Right lobe of liver (tissue), 6 donors: ENCODE measurements at regions of chr11 and their contacts with region 1.

Region 1: GRCh38 chr11:14907411-14908213 is 15.6 kb upstream of the CYP2R1 start:
- DNase-seq: peak; percentile 77 to 85 (median 78)
- ATAC-seq: peak; percentile 67 to 83 (median 72)
- H3K4me3 ChIP-seq: peak overlapping the region in 1 of 3 donors; percentile 8
- H3K27ac ChIP-seq: no peak overlapping the region
- H3K4me1 ChIP-seq: peaks cover 0 to 13% (median 3%) of the 10 kb centered on the region in 4 donors
- H3K27me3 ChIP-seq: no peaks in the 10 kb centered on the region
- CTCF ChIP-seq: peak; percentile 70 to 81 (median 77)
- POLR2A ChIP-seq: no peak

Region 2: DNA sequence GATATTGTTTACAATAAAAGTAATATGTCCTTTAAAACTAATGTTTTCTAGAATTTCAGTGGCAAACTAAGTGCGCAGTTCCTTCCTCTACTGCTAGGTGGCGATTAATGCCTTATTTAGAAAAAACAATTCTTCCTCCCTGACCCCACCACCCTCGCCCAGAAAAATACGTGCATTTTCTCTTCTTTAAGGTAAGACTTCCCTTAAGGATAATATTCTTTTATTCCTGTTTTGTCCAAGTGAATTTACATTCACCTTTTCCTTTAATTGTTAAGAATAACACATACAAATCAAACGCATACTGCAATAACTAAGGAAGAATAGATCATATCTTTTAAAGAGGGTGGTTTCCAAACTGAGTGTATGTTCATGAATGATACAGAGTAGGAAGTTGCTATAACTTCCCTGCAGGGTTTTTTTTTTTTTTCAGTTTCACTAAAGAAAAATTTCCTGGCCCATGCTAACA is 370.4 kb before region 1 on chr11:
- intact Hi-C with region 1: loop called in 1 of 2 experiments (anchors 10 kb)
- DNase-seq: no peak
- ATAC-seq: peak in 3 of 4 donors; percentile 20 to 43 (median 38)
- H3K4me3 ChIP-seq: no peak overlapping the region
- H3K27ac ChIP-seq: peak overlapping the region in 1 of 3 donors; percentile 94
- H3K4me1 ChIP-seq: peaks cover 0 to 45% (median 4%) of the 10 kb centered on the region in 4 donors
- H3K27me3 ChIP-seq: no peaks in the 10 kb centered on the region
- CTCF ChIP-seq: peak; percentile 74 to 80 (median 75)
- POLR2A ChIP-seq: no peak

Region 3: DNA sequence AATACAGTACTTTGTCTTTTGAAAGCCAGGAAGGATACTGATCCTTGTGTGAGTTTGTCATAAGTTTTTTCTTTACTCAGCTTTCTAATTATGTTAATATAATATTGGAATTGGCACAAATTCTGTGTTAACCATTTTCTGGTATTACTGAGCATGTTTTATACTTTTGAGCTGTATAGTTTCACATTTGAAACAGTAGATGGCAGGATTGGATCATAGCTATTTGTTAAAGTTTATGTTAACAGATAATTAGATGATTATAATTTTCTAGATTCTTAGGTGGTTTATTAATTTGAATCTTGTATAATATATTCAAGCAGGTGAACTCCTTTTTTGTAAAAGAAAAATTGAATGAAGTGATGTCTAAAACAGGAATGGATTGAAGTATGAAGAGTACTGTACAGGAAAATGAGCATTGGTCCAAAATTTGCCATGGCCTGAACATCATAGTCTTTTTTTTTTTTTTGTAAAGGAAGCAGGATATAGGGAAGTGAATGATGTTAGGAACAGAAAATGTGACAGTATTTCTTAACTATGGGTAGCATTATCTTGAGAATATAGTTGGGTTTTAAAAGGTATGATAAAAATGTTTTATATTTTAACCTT is 117.6 kb before region 1 on chr11:
- intact Hi-C with region 1: loop called in 1 of 2 experiments (anchors 10 kb)
- DNase-seq: no peak
- ATAC-seq: peak in 1 of 4 donors; percentile 35
- H3K4me3 ChIP-seq: no peak overlapping the region
- H3K27ac ChIP-seq: no peak overlapping the region
- H3K4me1 ChIP-seq: no peaks in the 10 kb centered on the region
- H3K27me3 ChIP-seq: no peaks in the 10 kb centered on the region
- CTCF ChIP-seq: peak; percentile 43 to 48 (median 47)
- POLR2A ChIP-seq: no peak

Region 4: DNA sequence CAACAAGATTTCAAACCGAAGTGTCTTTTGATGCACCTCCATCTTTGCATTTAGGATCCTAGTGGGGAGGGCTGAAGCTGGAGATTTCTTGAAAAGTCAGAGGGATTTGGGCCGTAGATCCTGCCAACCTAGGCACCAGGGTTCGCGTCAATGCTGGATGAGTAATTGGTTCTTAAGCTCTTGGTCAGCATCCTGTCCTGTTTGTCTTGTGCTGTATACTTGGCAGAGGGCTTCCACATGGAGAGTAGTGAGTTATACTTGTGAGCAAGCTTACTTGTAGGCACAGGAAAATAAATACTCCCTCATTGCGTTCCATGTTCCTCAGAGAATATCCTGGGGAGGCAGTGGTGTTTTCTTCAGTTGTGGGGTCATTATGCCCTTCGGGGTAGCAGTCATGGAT is 219.7 kb after region 1 on chr11:
- intact Hi-C with region 1: no loop called
- DNase-seq: no peak
- ATAC-seq: no peak
- H3K4me3 ChIP-seq: no peak overlapping the region
- H3K27ac ChIP-seq: no peak overlapping the region
- H3K4me1 ChIP-seq: no peaks in the 10 kb centered on the region
- H3K27me3 ChIP-seq: no peaks in the 10 kb centered on the region
- CTCF ChIP-seq: no peak
- POLR2A ChIP-seq: no peak